OCI-LY7 (cell line): ENCODE measurements at regions of chr13 and their contacts with region 1.

Region 1: GRCh38 chr13:26186118-26186870 is 35.8 kb downstream of the RNF6 start:
- DNase-seq: peak; percentile 90
- H3K4me3 ChIP-seq: peak overlapping the region; percentile 61
- H3K27ac ChIP-seq: peak overlapping the region; percentile 71
- H3K4me1 ChIP-seq: peaks cover 22% of the 10 kb centered on the region
- CTCF ChIP-seq: peak; percentile 48

Region 2: GRCh38 chr13:26011996-26012821 is 174.1 kb before region 1 on chr13:
- CTCF ChIA-PET with region 1: no interaction called
- POLR2A ChIA-PET with region 1: no interaction called
- intact Hi-C with region 1: no loop called
- DNase-seq: no peak
- H3K4me3 ChIP-seq: no peak overlapping the region
- H3K27ac ChIP-seq: no peak overlapping the region
- H3K4me1 ChIP-seq: no peaks in the 10 kb centered on the region
- CTCF ChIP-seq: no peak

Region 3: DNA sequence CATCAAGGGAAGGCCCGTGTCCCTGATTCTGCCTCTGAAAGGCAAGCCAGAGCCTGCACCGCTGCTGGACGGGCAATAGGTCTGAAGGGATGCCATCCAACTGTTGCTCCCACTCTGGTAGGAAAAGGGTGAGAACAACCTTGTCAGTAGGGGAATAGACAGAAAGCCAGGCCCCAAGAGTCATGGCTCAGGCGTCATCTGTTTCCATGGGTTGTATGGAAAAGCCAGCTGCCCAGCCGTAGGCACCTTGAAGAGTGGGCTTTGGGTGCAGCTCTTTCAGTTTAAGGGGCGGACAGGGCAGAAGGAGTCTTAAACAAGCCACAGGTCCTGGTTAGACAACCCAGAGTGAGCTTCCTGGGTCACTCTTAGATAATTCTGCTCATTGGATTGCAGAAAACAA is 30.7 kb before region 1 on chr13:
- CTCF ChIA-PET with region 1: no interaction called
- POLR2A ChIA-PET with region 1: no interaction called
- intact Hi-C with region 1: no loop called
- DNase-seq: no peak
- H3K4me3 ChIP-seq: no peak overlapping the region
- H3K27ac ChIP-seq: no peak overlapping the region
- H3K4me1 ChIP-seq: no peaks in the 10 kb centered on the region
- CTCF ChIP-seq: no peak

Region 4: GRCh38 chr13:26253787-26254582 is 67.7 kb after region 1 on chr13 and contains the start of gene CDK8:
- CTCF ChIA-PET with region 1: no interaction called
- POLR2A ChIA-PET with region 1: no interaction called
- intact Hi-C with region 1: loop called (anchors 2 kb)
- DNase-seq: peak; percentile 93
- H3K4me3 ChIP-seq: peak within 1 kb of the TSS; percentile 83
- H3K27ac ChIP-seq: peak within 1 kb of the TSS; percentile 68
- H3K4me1 ChIP-seq: peaks cover 29% of the 10 kb centered on the region
- CTCF ChIP-seq: no peak
- total RNA-seq, gene CDK8: 11.6 and 16.8 TPM in 2 replicates

Region 5: GRCh38 chr13:26406791-26407190 is 220.5 kb after region 1 on chr13:
- CTCF ChIA-PET with region 1: no interaction called
- POLR2A ChIA-PET with region 1: no interaction called
- intact Hi-C with region 1: loop called (anchors 10 kb)
- DNase-seq: no peak
- H3K4me3 ChIP-seq: no peak overlapping the region
- H3K27ac ChIP-seq: no peak overlapping the region
- H3K4me1 ChIP-seq: no peaks in the 10 kb centered on the region
- CTCF ChIP-seq: no peak

Region 6: GRCh38 chr13:26482451-26483197 is 296.3 kb after region 1 on chr13:
- CTCF ChIA-PET with region 1: no interaction called
- POLR2A ChIA-PET with region 1: no interaction called
- intact Hi-C with region 1: loop called (anchors 5 kb)
- DNase-seq: peak; percentile 87
- H3K4me3 ChIP-seq: peak overlapping the region; percentile 2
- H3K27ac ChIP-seq: no peak overlapping the region
- H3K4me1 ChIP-seq: peaks cover 14% of the 10 kb centered on the region
- CTCF ChIP-seq: peak; percentile 90

Region 7: GRCh38 chr13:26498656-26499591 is 312.6 kb after region 1 on chr13:
- CTCF ChIA-PET with region 1: interaction called, 20 read pairs
- POLR2A ChIA-PET with region 1: no interaction called
- intact Hi-C with region 1: loop called (anchors 1 kb)
- DNase-seq: no peak
- H3K4me3 ChIP-seq: no peak overlapping the region
- H3K27ac ChIP-seq: no peak overlapping the region
- H3K4me1 ChIP-seq: no peaks in the 10 kb centered on the region
- CTCF ChIP-seq: no peak

Region 8: DNA sequence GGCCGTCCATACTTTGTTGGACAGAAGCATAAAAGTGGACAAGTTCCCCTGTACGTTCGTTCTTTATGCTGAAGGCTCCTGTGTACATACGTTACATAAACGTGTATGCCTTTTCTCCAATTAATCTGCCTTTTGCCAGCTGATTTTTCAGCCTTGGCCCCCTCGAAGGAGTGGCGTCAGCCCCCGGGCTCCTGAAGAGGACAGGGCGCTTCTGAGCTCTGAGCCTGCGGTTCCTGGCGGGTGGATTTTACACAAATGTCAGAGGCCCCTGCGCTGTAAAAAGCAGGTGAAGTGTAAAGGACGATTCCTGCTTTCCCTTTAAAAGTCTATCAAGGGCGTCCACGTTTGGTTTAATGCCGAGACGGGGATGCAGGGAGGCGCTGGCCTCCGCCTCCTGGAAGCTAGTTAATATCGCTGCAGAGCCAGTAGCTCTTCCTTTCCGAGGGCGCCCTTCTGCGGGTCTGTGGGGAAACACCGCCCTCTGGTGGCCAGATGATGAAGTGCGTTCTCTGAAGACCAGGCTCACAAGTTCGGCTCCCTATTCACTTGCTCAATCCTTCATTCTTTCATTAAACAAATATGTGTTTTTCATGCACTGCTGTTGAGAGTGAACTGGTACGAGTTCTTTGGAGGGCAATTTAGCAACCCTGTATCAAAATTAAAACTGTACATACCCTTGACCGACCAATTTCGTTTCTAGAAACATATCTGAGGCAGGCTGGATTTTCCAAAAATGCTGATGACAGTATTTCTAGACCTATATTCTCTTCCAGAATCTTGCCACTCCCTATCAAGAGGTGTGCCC is 512.3 kb after region 1 on chr13:
- CTCF ChIA-PET with region 1: interaction called, 3 read pairs
- POLR2A ChIA-PET with region 1: no interaction called
- intact Hi-C with region 1: loop called (anchors 2 kb)
- DNase-seq: peak; percentile 73
- H3K4me3 ChIP-seq: no peak overlapping the region
- H3K27ac ChIP-seq: no peak overlapping the region
- H3K4me1 ChIP-seq: no peaks in the 10 kb centered on the region
- CTCF ChIP-seq: peak; percentile 97

Region 9: GRCh38 chr13:26785838-26786630 is 599.7 kb after region 1 on chr13:
- CTCF ChIA-PET with region 1: interaction called, 3 read pairs
- POLR2A ChIA-PET with region 1: no interaction called
- intact Hi-C with region 1: loop called (anchors 10 kb)
- DNase-seq: peak; percentile 90
- H3K4me3 ChIP-seq: peak overlapping the region; percentile 68
- H3K27ac ChIP-seq: peak overlapping the region; percentile 86
- H3K4me1 ChIP-seq: peaks cover 28% of the 10 kb centered on the region
- CTCF ChIP-seq: no peak